Gastrocnemius medialis (tissue), 4 donors: ENCODE measurements at regions of chr13 and their contacts with region 1.

Region 1: GRCh38 chr13:113863436-113864272 is at the start of gene GAS6:
- DNase-seq: peak; percentile 62 to 76
- ATAC-seq: peak; percentile 80 to 81
- H3K4me3 ChIP-seq: peak within 1 kb of the TSS; percentile 54 to 84 (median 71)
- H3K27ac ChIP-seq: peak within 1 kb of the TSS; percentile 89 to 93 (median 90)
- H3K4me1 ChIP-seq: peaks cover 5 to 22% of the 10 kb centered on the region in 2 donors
- H3K27me3 ChIP-seq: no peaks in the 10 kb centered on the region
- CTCF ChIP-seq: peak in 3 of 5 experiments; percentile 27 to 39 (median 35)
- POLR2A ChIP-seq: peak; percentile 76 to 78
- total RNA-seq, gene GAS6: 68.6 to 122 (median 86.3) TPM

Region 2: DNA sequence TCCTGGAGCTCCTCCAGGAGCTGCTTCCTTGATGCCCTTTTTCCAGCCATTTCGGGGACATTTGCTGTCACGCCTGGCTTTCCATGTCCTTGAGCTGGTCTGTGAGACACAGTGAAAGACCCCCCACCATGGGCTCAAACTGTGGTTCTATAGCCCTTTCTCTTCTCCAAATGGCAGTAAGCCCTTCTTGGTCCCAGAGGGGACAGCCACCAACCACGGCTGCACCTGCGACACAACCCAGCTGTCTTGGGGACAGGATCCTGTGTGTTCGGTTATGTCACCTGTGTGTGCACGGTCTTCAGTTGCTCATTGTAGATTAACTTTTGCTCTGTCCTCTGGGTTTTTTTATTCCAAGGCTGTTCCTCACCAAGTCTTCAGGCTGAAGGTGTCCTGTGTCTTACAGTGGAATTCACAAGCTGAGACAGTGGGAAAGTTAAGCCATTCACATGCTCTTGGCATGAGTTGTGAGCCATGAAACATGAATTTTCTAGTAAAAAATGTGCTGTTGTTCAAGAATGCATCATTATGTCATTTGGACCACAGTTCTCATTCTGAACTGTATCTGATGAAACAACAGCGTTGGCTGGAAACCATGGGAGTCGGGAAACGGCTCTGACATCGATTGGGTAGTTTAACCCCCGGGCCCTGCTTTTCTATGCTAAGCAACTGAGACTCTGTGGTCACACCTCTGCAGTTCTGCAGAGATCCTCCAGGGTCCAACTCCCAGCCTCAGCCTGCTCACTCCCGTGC is 1024.1 kb before region 1 on chr13:
- in situ Hi-C with region 1: no loop called
- intact Hi-C with region 1: no loop called
- DNase-seq: no peak
- ATAC-seq: no peak
- H3K4me3 ChIP-seq: no peak overlapping the region
- H3K27ac ChIP-seq: no peak overlapping the region
- H3K4me1 ChIP-seq: peaks cover 4 to 6% of the 10 kb centered on the region in 2 donors
- H3K27me3 ChIP-seq: no peaks in the 10 kb centered on the region
- CTCF ChIP-seq: no peak
- POLR2A ChIP-seq: no peak

Region 3: GRCh38 chr13:113928685-113929627 is 65.3 kb after region 1 on chr13:
- in situ Hi-C with region 1: no loop called
- intact Hi-C with region 1: loop called (anchors 2 kb)
- DNase-seq: peak; percentile 95 to 99
- ATAC-seq: peak; percentile 81 to 82
- H3K4me3 ChIP-seq: peak overlapping the region in 2 of 4 donors; percentile 5 to 28
- H3K27ac ChIP-seq: peak overlapping the region; percentile 84 to 90 (median 87)
- H3K4me1 ChIP-seq: peaks cover 38 to 40% of the 10 kb centered on the region in 2 donors
- H3K27me3 ChIP-seq: no peaks in the 10 kb centered on the region
- CTCF ChIP-seq: no peak
- POLR2A ChIP-seq: peak in 1 of 2 donors; percentile 8

Region 4: DNA sequence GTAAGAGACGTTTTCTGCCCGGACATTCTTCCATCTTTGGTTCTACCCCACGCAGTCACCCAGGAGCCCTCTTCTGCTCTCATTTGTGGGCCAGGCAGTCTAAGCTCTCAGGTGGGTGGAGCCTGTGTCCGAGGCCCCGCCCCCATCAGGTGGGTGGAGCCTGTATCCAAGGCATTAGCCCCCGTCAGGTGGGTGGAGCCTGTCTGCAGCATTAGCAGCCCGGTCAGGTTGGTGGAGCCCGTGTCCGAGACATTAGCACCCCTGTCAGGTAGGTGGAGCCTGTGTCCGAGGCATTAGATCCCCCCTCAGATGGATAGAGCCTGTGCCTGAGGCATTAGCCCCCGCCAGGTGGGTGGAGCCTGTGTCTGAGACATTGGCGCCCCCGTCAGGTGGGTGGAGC is 155.7 kb after region 1 on chr13:
- in situ Hi-C with region 1: no loop called
- intact Hi-C with region 1: no loop called
- DNase-seq: no peak
- ATAC-seq: no peak
- H3K4me3 ChIP-seq: no peak overlapping the region
- H3K27ac ChIP-seq: no peak overlapping the region
- H3K4me1 ChIP-seq: no peaks in the 10 kb centered on the region
- H3K27me3 ChIP-seq: no peaks in the 10 kb centered on the region
- CTCF ChIP-seq: no peak
- POLR2A ChIP-seq: no peak

Region 5: GRCh38 chr13:114078461-114079451 is 215.1 kb after region 1 on chr13:
- in situ Hi-C with region 1: no loop called
- intact Hi-C with region 1: no loop called
- DNase-seq: peak in 1 of 2 donors; percentile 14
- ATAC-seq: no peak
- H3K4me3 ChIP-seq: no peak overlapping the region
- H3K27ac ChIP-seq: peak overlapping the region in 1 of 4 donors; percentile 33
- H3K4me1 ChIP-seq: peaks cover 7 to 11% of the 10 kb centered on the region in 2 donors
- H3K27me3 ChIP-seq: no peaks in the 10 kb centered on the region
- CTCF ChIP-seq: no peak
- POLR2A ChIP-seq: no peak